Caco-2 (cell line): ENCODE measurements at regions of chr15 and their contacts with region 1.

Region 1: GRCh38 chr15:88913017-88913849 is at the start of gene MFGE8:
- DNase-seq: peak; percentile 84 to 87
- H3K4me3 ChIP-seq: peak within 1 kb of the TSS; percentile 80
- H3K4me3 Mint-ChIP-seq: peak within 1 kb of the TSS; percentile 91
- H3K27ac Mint-ChIP-seq: peak within 1 kb of the TSS; percentile 88
- H3K4me1 ChIP-seq: peaks cover 15% of the 10 kb centered on the region
- H3K4me1 Mint-ChIP-seq: peaks cover 13% of the 10 kb centered on the region
- H3K27me3 ChIP-seq: no peaks in the 10 kb centered on the region
- H3K27me3 Mint-ChIP-seq: no peaks in the 10 kb centered on the region
- CTCF ChIP-seq: peak in 1 of 2 experiments; percentile 1
- total RNA-seq, gene MFGE8: 409 and 453 TPM in 2 replicates

Region 2: GRCh38 chr15:88932271-88932874 is 19.1 kb after region 1 on chr15:
- CTCF ChIA-PET with region 1: no interaction called
- POLR2A ChIA-PET with region 1: no interaction called
- intact Hi-C with region 1: loop called (anchors 2 kb)
- DNase-seq: peak in 1 of 2 experiments; percentile 51
- H3K4me3 ChIP-seq: no peak overlapping the region
- H3K4me3 Mint-ChIP-seq: no peak overlapping the region
- H3K27ac Mint-ChIP-seq: peak overlapping the region; percentile 64
- H3K4me1 ChIP-seq: peaks cover 16% of the 10 kb centered on the region
- H3K4me1 Mint-ChIP-seq: peaks cover 13% of the 10 kb centered on the region
- H3K27me3 ChIP-seq: no peaks in the 10 kb centered on the region
- H3K27me3 Mint-ChIP-seq: no peaks in the 10 kb centered on the region
- CTCF ChIP-seq: no peak

Region 3: DNA sequence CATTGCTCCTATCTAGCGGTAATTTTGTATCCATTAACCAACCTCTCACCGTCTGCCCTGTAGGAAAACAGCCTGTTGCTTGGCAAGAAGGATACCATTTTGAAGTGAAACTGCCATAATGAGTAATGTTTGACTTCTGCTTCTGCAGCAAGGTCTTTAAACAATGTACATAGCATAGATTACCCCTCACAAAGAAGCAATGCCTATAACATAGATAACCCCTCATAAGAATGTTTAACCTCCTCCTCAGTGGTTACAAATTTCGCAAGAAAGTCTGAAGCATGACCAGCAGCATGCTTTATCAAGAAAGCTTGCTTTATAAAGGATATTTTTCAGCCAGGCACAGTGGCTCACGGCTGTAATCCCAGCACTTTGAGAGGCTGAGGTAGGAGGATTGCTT is 61.2 kb after region 1 on chr15:
- CTCF ChIA-PET with region 1: no interaction called
- POLR2A ChIA-PET with region 1: interaction called, 3 read pairs
- intact Hi-C with region 1: loop called (anchors 2 kb)
- DNase-seq: peak; percentile 73 to 78
- H3K4me3 ChIP-seq: no peak overlapping the region
- H3K4me3 Mint-ChIP-seq: peak overlapping the region; percentile 27
- H3K27ac Mint-ChIP-seq: peak overlapping the region; percentile 63
- H3K4me1 ChIP-seq: peaks cover 36% of the 10 kb centered on the region
- H3K4me1 Mint-ChIP-seq: peaks cover 6% of the 10 kb centered on the region
- H3K27me3 ChIP-seq: no peaks in the 10 kb centered on the region
- H3K27me3 Mint-ChIP-seq: no peaks in the 10 kb centered on the region
- CTCF ChIP-seq: no peak

Region 4: DNA sequence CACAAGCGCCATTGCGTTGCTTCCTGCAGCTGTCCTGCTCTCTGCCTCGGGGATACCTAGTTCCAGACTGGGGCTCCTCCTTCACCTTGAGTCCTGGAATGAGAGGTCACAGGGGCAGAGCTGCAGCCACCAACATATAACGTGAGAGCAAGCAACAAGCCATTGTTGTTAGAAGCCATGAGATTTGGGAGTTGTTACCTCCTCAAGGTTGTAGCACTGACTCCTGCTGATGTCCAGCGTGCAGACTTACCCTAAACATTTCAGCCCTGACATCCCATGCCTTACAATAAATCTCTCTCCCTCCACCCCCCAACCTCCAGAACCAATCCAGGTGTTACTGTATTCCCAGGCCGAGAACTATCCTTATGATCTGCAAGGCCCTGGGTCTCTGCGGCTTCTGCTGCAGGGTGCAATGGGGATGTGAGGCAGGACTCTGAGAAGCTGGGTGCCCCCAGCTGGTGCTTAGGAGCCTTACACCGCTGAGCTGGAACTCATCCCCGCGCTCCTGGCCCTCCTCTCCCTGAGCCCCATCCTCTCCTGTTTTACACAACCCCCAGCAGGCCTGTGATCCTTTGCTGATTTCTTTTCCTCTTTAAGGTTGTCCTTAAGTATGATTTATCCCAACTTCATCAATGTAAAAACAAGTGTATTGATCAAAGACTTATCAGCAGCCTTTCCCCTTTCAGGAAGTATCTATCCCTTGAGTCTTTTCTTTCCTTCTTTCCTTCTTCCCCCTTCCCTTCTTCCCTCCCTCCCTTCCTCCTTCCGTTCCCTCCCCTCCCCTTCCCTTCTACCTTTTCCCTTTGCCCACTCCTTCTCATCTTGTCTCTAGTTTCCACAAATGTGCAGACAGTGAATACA is 90.9 kb after region 1 on chr15:
- CTCF ChIA-PET with region 1: interaction called, 7 read pairs
- POLR2A ChIA-PET with region 1: no interaction called
- intact Hi-C with region 1: loop called (anchors 2 kb)
- DNase-seq: peak; percentile 60 to 73
- H3K4me3 ChIP-seq: no peak overlapping the region
- H3K4me3 Mint-ChIP-seq: no peak overlapping the region
- H3K27ac Mint-ChIP-seq: no peak overlapping the region
- H3K4me1 ChIP-seq: peaks cover 16% of the 10 kb centered on the region
- H3K4me1 Mint-ChIP-seq: peaks cover 6% of the 10 kb centered on the region
- H3K27me3 ChIP-seq: no peaks in the 10 kb centered on the region
- H3K27me3 Mint-ChIP-seq: no peaks in the 10 kb centered on the region
- CTCF ChIP-seq: peak; percentile 43 to 49